Endothelial cell of umbilical vein (primary cell): ENCODE measurements at regions of chr4 and their contacts with region 1.

Region 1: GRCh38 chr4:182604161-182604622 is 313.0 kb downstream of the DCTD start:
- DNase-seq: peak; percentile 88
- H3K4me3 ChIP-seq: peak overlapping the region in 1 of 3 experiments; percentile 43
- H3K27ac ChIP-seq: peak overlapping the region; percentile 99
- H3K4me1 ChIP-seq: peaks cover 30% of the 10 kb centered on the region
- H3K27me3 ChIP-seq: no peaks in the 10 kb centered on the region
- CTCF ChIP-seq: no peak
- POLR2A ChIP-seq: peak; percentile 61

Region 2: DNA sequence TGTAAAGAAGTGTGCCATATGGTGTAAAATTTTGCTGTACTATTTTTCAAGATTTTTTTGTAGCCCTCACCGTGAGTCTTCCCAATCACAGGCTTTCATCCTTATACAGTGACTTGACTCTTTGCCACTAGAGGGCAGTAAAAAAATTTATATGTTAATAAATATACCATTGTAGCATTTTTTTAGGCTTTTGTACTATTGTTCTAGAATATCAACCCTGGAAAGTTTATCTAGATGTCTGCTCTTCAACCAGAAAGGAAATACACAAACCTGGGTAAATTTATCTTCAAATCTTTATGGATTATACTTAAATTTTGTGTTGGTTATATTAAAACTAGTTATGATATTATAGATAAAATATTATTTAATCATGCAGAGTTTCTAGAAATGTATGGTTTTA is 125.7 kb before region 1 on chr4:
- CTCF ChIA-PET with region 1: no interaction called
- POLR2A ChIA-PET with region 1: no interaction called
- dilution Hi-C with region 1: no loop called
- intact Hi-C with region 1: loop called (anchors 2 kb)
- DNase-seq: peak; percentile 55
- H3K4me3 ChIP-seq: no peak overlapping the region
- H3K27ac ChIP-seq: no peak overlapping the region
- H3K4me1 ChIP-seq: no peaks in the 10 kb centered on the region
- H3K27me3 ChIP-seq: no peaks in the 10 kb centered on the region
- CTCF ChIP-seq: peak; percentile 34 to 39
- POLR2A ChIP-seq: no peak

Region 3: DNA sequence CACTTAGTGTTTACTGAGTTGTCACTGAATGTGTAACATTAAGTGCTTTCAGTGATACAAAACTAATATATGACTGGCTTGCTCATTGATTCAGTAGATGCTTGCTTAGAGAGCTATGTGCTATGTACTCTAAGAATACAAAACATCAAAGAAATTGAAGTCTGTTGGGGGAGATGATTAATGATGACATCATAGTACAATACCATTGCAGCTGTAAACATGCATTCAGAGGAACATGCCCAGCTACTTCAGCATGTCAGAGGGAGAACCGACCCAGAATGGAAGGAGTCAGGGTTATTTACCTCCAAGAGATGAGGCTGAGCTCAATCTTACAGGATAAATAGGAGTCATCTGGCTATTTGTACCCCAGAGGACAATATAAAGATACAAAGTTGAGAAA is 70.2 kb before region 1 on chr4:
- CTCF ChIA-PET with region 1: no interaction called
- POLR2A ChIA-PET with region 1: no interaction called
- dilution Hi-C with region 1: no loop called
- intact Hi-C with region 1: loop called (anchors 2 kb)
- DNase-seq: peak; percentile 63
- H3K4me3 ChIP-seq: no peak overlapping the region
- H3K27ac ChIP-seq: no peak overlapping the region
- H3K4me1 ChIP-seq: peaks cover 5% of the 10 kb centered on the region
- H3K27me3 ChIP-seq: peaks cover 0 to 2% of the 10 kb centered on the region in 2 experiments
- CTCF ChIP-seq: no peak
- POLR2A ChIP-seq: no peak

Region 4: GRCh38 chr4:182578402-182578801 is 25.8 kb before region 1 on chr4:
- CTCF ChIA-PET with region 1: interaction called, 4 read pairs
- POLR2A ChIA-PET with region 1: interaction called, 4 read pairs
- dilution Hi-C with region 1: no loop called
- intact Hi-C with region 1: loop called (anchors 1 kb)
- DNase-seq: peak; percentile 53
- H3K4me3 ChIP-seq: no peak overlapping the region
- H3K27ac ChIP-seq: peak overlapping the region; percentile 21
- H3K4me1 ChIP-seq: peaks cover 3% of the 10 kb centered on the region
- H3K27me3 ChIP-seq: no peaks in the 10 kb centered on the region
- CTCF ChIP-seq: no peak
- POLR2A ChIP-seq: no peak

Region 5: GRCh38 chr4:182593864-182594263 is 10.3 kb before region 1 on chr4:
- CTCF ChIA-PET with region 1: interaction called, 22 read pairs
- POLR2A ChIA-PET with region 1: interaction called, 37 read pairs
- dilution Hi-C with region 1: no loop called
- intact Hi-C with region 1: loop called (anchors 1 kb)
- DNase-seq: peak; percentile 95
- H3K4me3 ChIP-seq: peak overlapping the region in 1 of 3 experiments; percentile 44
- H3K27ac ChIP-seq: peak overlapping the region; percentile 91
- H3K4me1 ChIP-seq: peaks cover 26% of the 10 kb centered on the region
- H3K27me3 ChIP-seq: no peaks in the 10 kb centered on the region
- CTCF ChIP-seq: no peak
- POLR2A ChIP-seq: no peak

Region 6: DNA sequence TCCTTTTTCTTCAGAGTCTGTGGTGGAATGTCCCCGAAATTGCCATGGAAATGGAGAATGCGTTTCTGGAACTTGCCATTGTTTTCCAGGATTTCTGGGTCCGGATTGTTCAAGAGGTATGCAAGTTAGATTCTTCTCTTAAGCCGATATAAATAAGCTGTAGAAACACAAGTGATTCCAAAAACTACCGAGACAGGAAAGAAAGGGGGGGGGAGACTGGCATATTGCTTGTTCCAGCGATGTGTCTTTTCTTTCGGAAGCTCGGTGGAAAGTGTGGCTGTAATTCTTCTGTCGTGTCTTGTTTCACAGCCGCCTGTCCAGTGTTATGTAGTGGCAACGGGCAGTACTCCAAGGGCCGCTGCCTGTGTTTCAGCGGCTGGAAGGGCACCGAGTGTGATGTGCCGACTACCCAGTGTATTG is 76.1 kb after region 1 on chr4:
- CTCF ChIA-PET with region 1: no interaction called
- POLR2A ChIA-PET with region 1: no interaction called
- dilution Hi-C with region 1: no loop called
- intact Hi-C with region 1: no loop called
- DNase-seq: peak; percentile 13
- H3K4me3 ChIP-seq: no peak overlapping the region
- H3K27ac ChIP-seq: no peak overlapping the region
- H3K4me1 ChIP-seq: peaks cover 2% of the 10 kb centered on the region
- H3K27me3 ChIP-seq: no peaks in the 10 kb centered on the region
- CTCF ChIP-seq: no peak
- POLR2A ChIP-seq: no peak

Region 7: GRCh38 chr4:182752158-182752910 is 148.1 kb after region 1 on chr4:
- CTCF ChIA-PET with region 1: interaction called, 8 read pairs
- POLR2A ChIA-PET with region 1: interaction called, 5 read pairs
- dilution Hi-C with region 1: no loop called
- intact Hi-C with region 1: loop called (anchors 1 kb)
- DNase-seq: peak; percentile 67
- H3K4me3 ChIP-seq: no peak overlapping the region
- H3K27ac ChIP-seq: peak overlapping the region; percentile 77
- H3K4me1 ChIP-seq: peaks cover 34% of the 10 kb centered on the region
- H3K27me3 ChIP-seq: no peaks in the 10 kb centered on the region
- CTCF ChIP-seq: no peak
- POLR2A ChIP-seq: no peak

Region 8: DNA sequence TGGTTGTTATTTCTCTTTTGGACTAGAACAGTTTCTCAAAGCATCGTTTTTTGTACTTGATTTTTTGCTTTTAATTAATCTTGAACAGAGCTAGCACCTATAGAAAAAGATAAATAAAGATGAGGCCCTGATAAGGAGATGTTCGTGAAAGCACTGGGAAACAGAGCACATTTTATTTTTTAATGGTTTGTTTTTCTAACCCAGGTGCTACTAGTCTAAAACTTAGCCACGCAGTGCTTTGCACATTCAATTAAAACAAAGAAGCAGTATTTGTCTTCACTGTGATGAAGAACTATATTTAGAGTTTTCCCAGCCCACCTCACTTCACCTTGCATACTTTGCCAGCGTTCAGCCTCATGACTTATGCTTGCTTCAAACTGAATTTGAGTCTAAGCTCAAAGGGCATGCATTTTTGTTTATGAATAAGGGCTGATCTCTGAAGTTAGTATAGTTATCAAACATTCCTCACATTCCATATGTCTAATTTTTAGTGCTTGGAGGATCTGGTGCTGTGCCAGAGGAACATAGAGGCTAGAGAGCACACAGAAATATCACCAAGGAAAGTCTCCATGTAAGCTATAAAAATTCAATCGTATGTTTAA is 571.5 kb after region 1 on chr4:
- CTCF ChIA-PET with region 1: no interaction called
- POLR2A ChIA-PET with region 1: no interaction called
- dilution Hi-C with region 1: no loop called
- intact Hi-C with region 1: no loop called
- DNase-seq: peak; percentile 68
- H3K4me3 ChIP-seq: no peak overlapping the region
- H3K27ac ChIP-seq: peak overlapping the region; percentile 25
- H3K4me1 ChIP-seq: peaks cover 37% of the 10 kb centered on the region
- H3K27me3 ChIP-seq: no peaks in the 10 kb centered on the region
- CTCF ChIP-seq: no peak
- POLR2A ChIP-seq: no peak